Activated T-helper 2 cell treated with anti-CD3 and anti-CD28 coated beads, Interferon-gamma antibody, Interleukin-2, Interleukin-4, amounts not matched to agents 10 μg/mL and 5 μg/mL and 100 μg/mL, durations not matched to agents 14 hours and 24 hours and 36 hours (primary cell): ENCODE measurements at regions of chr10 and their contacts with region 1.

Region 1: DNA sequence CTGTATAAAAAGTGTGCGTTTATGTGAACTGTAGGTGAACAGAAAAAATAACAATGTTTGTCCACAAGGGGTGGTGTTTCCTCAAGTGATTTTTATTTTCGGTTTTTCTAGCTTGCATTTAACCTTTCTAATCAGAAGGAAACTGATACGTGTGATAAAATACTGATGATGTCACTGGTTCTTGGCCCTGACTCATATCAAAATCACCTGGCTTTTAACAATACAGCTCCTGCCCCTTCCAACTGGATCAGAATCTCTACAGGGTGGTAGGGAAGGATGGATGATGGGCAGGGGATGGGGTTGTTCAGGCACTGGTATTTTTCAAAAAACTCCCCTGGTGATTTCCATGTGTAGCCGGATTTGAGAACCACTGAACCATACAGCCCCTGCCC is 10.9 kb downstream of the NPFFR1 start:
- DNase-seq: no peak
- H3K4me3 Mint-ChIP-seq: no peak overlapping the region
- H3K27ac Mint-ChIP-seq: no peak overlapping the region
- H3K4me1 Mint-ChIP-seq: peaks cover 12% of the 10 kb centered on the region
- H3K27me3 Mint-ChIP-seq: no peaks in the 10 kb centered on the region

Region 2: GRCh38 chr10:70162892-70163201 is 110.1 kb before region 1 on chr10:
- intact Hi-C with region 1: loop called (anchors 5 kb)
- DNase-seq: peak; percentile 68
- H3K4me3 Mint-ChIP-seq: peak overlapping the region; percentile 53
- H3K27ac Mint-ChIP-seq: peak overlapping the region; percentile 88
- H3K4me1 Mint-ChIP-seq: peaks cover 60% of the 10 kb centered on the region
- H3K27me3 Mint-ChIP-seq: no peaks in the 10 kb centered on the region

Region 3: GRCh38 chr10:70355051-70356021 is 82.4 kb after region 1 on chr10:
- intact Hi-C with region 1: loop called (anchors 2 kb)
- DNase-seq: no peak
- H3K4me3 Mint-ChIP-seq: peak overlapping the region; percentile 36
- H3K27ac Mint-ChIP-seq: peak overlapping the region; percentile 64
- H3K4me1 Mint-ChIP-seq: peaks cover 22% of the 10 kb centered on the region
- H3K27me3 Mint-ChIP-seq: no peaks in the 10 kb centered on the region

Region 4: GRCh38 chr10:70363971-70364771 is 91.2 kb after region 1 on chr10:
- intact Hi-C with region 1: loop called (anchors 1 kb)
- DNase-seq: peak; percentile 77
- H3K4me3 Mint-ChIP-seq: no peak overlapping the region
- H3K27ac Mint-ChIP-seq: no peak overlapping the region
- H3K4me1 Mint-ChIP-seq: peaks cover 8% of the 10 kb centered on the region
- H3K27me3 Mint-ChIP-seq: no peaks in the 10 kb centered on the region